Right ventricle myocardium inferior (tissue), 1 donor: ENCODE measurements at regions of chr22 and their contacts with region 1.

Region 1: GRCh38 chr22:36144886-36145541 is 15.5 kb downstream of the APOL3 start:
- DNase-seq: no peak
- ATAC-seq: peak; percentile 84

Region 2: GRCh38 chr22:36104988-36105387 is 40.0 kb before region 1 on chr22:
- intact Hi-C with region 1: no loop called
- DNase-seq: no peak
- ATAC-seq: no peak

Region 3: DNA sequence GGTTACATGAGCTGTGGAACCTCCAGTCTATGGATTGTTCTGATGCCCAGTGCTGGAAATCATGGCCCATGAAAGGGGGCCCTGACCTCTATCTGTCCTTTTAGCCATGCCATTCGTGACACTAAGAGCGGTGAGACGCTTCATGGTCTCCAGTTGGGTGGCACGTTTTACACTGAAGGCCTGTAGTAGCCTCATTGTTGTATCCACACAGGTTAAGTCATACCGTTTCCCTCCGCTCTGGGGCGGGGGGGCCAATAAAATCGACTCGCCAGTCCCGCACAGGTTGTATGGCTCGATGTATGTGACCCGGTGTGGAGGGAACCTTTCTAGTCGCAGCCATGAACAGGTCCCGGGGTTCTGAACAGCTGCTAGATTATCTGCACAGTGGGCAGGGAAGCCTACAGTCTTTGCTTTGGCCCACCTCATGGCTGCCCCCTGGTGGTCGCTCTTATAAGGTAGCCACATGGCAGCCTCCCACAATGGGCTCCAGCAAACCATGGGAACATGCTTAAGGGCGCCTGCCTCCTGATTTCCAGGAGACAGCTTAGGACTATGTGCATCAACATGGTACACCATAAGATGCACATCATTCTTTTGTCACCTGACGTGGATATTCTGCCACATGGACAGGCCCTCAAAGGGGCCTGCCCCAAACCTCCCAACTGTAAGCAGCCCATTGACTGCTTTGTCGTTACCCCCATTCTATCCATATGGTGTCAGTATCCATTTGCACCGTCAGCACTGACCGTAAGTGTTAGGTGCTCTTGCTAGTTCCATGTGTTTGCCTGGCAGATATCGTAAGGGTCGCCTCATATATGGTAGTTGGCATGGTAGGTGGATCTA is 35.2 kb after region 1 on chr22:
- intact Hi-C with region 1: loop called (anchors 2 kb)
- DNase-seq: peak; percentile 92
- ATAC-seq: peak; percentile 96

Region 4: DNA sequence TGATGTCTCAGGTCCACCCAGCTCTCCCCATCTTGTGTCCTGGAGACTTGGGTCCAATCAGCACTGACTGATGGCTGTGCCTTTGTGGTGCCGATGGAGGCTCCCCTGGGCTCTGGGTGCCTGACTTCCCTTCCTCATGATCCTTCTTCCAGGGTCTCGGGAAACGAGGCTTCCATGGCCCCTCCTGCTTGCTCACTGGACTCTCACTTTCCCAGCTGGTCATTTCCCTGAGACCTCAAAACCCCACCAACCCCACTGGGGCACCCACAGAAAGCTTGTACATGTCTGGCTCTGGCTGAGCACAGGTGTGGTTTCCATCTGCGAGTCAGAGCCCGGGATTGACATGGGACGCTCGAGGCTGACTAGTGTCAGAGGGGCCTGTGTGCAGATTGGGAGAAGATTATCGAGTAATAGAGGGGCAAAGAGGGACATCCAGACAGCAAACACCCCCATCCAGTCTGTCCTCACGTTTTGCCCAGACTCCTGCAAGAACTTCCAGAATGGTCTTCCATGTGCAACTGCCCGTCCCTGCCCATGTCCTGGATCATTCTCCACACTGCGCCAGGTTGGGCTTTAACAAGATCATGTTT is 123.0 kb after region 1 on chr22:
- intact Hi-C with region 1: loop called (anchors 5 kb)
- DNase-seq: no peak
- ATAC-seq: no peak

Region 5: GRCh38 chr22:36486619-36487384 is 341.8 kb after region 1 on chr22:
- intact Hi-C with region 1: loop called (anchors 5 kb)
- DNase-seq: peak; percentile 15
- ATAC-seq: no peak